Activated CD8-positive, alpha-beta T cell treated with anti-CD3 and anti-CD28 coated beads for 36 hours (primary cell): ENCODE measurements at regions of chr10 and their contacts with region 1.

Region 1: DNA sequence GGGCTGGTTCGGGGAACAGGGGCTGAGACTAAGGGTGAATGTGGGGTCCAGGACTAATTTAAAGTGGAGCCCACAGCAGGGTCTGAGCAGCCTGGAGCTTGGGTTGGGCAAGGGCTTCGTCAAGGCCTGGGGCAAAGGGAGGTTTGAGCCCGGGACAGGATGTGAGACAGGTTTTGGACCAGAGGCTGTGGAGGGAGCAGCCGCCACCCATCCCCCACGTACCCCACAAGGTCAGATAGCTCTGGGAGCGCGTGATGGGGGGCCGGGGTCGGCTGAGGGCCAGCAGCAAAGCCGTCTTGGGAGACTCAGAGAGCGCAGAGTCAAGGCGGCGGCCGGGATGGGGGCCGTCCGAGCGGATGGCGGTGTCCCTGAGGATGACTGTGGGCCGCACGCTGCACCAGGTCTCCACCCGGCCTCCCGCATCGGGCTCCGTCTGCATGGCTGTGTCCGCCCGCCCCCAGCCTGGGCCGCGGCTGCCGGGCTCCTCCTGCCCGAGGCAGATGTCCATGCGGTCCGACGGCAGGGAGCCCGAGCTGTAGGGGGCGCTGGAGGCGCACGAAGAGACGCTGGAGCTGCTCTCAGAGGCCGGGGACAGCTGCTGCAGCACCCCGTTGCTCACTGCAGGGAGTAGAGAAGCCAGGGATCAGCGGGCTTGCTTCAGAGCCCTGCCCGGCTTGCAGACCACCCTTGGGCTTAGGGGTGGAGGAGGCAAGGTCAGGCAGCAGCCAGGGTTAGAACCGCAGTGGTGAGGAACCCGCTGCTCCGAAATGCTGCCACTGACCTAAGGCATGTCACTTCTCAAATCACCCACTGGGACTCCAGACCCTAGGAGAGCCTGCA is 12.1 kb downstream of the PDZD7 start:
- DNase-seq: peak; percentile 93
- ATAC-seq: peak; percentile 87
- H3K4me3 Mint-ChIP-seq: no peak overlapping the region
- H3K27ac Mint-ChIP-seq: no peak overlapping the region
- H3K4me1 Mint-ChIP-seq: peaks cover 20% of the 10 kb centered on the region
- H3K27me3 Mint-ChIP-seq: peaks cover 42% of the 10 kb centered on the region
- CTCF ChIP-seq: peak; percentile 91

Region 2: DNA sequence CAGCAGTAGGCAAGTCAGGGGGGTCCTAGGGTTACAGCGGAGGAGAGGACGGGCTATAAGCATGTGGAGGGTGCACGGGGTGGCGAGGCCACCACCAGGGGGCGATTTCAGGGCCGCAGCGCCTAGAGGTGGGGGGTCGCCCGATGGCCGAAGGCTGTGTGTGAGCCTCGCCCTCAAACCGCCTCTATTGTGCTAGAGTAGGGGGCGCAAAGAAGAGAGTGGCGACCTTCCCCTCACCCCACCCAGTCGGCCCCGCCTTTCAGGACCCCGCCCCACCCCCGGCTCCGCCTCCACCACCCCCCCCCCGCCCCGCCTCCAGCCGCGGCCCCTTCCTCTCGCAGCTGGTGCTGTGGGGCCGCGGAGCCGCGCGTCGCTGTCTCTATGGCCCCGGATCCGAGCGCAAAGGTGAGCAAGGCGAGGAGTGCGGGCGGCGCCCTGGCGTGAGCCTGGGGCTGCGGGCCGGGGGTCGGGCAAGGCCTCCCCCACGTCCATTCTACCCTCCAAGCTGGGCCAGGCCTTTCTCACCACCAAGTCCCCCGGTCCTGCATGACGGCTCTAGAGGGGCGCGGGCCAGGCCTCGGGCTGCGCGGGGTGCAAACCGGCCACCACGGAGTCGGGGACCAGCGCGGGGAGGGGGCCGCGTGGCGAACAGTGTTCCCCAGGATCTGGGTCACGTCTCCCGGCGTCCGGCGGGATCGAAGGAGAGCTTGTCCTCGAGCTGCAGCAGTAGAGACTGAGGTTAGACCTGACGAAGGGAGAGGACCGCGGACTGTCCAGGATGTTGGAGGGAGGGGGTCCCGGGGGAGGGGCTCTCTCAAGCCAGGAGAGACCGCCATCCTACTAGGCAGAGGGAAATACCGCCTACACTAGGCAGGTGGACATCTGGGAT is 49.4 kb before region 1 on chr10 and contains the start of gene SEMA4G:
- CTCF ChIA-PET with region 1: interaction called, 58 read pairs
- POLR2A ChIA-PET with region 1: interaction called, 3 read pairs
- intact Hi-C with region 1: no loop called
- DNase-seq: peak; percentile 64
- ATAC-seq: peak; percentile 85
- H3K4me3 Mint-ChIP-seq: peak within 1 kb of the TSS; percentile 47
- H3K27ac Mint-ChIP-seq: peak within 1 kb of the TSS; percentile 12
- H3K4me1 Mint-ChIP-seq: peaks cover 20% of the 10 kb centered on the region
- H3K27me3 Mint-ChIP-seq: no peaks in the 10 kb centered on the region
- CTCF ChIP-seq: peak; percentile 78
- total RNA-seq, gene SEMA4G: 1.2 to 1.6 TPM

Region 3: DNA sequence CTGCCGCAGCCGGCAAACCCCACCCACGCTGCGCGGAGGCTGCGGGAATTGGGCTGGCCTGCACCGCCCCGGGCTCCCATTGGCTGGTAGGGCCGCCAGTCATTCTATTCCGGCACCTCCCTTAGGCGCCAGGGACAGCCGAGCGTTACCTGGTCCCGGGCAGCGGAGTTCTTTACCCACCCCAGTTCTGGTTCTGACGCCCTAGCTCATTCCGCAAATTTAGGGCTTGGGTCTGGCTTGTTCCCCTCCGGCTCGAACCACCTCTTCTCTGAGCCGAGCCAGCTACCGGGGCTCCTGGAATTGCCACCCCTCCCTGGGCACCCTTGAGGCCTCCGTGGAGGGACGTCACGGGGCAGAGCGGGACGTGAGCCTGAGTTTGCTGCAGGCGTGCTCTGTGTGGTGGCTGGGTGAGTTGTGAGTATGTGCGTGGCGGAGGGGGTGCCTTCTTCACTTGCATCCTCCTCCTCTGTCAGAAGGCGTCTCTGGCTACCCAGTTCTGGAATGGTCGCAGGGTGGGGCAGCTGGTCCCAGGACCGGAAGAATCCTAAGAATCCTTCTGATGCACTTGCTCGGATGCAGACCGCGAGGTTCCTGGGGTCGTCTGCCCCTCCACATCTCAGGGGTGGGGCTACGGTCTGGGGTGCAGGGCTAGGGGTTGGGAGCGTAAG is 12.4 kb after region 1 on chr10 and contains the starts of genes PDZD7 and SFXN3:
- CTCF ChIA-PET with region 1: interaction called, 147 read pairs
- POLR2A ChIA-PET with region 1: interaction called, 9 read pairs
- intact Hi-C with region 1: no loop called
- DNase-seq: peak; percentile 98
- ATAC-seq: peak; percentile 79
- H3K4me3 Mint-ChIP-seq: peak within 1 kb of the TSS; percentile 78
- H3K27ac Mint-ChIP-seq: peak within 1 kb of the TSS; percentile 90
- H3K4me1 Mint-ChIP-seq: peaks cover 10% of the 10 kb centered on the region
- H3K27me3 Mint-ChIP-seq: peaks cover 6% of the 10 kb centered on the region
- CTCF ChIP-seq: no peak
- total RNA-seq, gene PDZD7: 0.25 to 0.65 TPM
- total RNA-seq, gene SFXN3: 28.8 to 29.6 TPM

Region 4: DNA sequence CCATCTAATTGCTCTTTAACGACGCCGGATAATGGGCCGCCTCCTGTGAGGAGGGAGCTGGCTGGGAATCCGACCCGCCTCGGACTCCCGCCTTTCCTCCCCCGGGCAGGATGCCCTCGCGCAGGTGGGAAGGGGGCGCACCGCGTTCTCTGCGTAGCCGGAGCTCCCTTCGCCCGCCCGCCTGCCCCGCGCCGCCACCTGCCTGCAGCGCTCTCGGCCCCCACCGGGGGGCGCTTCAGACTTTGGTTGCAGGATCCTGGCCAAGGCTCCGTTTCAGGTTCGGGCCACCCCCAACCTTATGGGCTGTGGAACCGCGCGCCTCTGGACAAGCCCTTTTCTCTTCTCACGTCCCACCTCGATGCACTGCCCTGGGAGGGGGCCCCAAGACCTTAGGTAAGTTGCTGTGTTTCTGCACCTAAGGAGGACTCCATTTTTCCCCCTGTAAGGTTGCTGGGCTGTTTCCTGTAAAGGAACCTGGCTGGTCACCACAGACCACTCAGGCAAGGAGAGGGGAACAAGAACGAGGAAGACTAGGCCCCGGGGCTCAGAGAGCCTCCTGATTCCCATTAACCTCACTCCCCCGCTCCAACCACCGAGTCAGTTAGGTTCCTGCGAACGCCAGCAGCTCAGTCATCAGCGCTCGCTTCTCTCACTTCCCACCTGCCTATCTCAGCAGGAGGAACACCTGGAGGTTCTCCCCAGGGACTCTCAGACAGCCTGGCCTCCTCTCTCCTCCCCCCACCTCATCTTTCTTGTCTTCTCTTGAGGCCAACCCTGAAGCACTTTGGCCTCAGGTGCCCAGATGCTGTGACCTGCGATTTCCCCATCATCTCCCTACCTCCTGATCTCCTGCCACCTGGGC is 31.6 kb after region 1 on chr10:
- CTCF ChIA-PET with region 1: interaction called, 114 read pairs
- POLR2A ChIA-PET with region 1: no interaction called
- intact Hi-C with region 1: no loop called
- DNase-seq: peak; percentile 83
- ATAC-seq: peak; percentile 97
- H3K4me3 Mint-ChIP-seq: no peak overlapping the region
- H3K27ac Mint-ChIP-seq: no peak overlapping the region
- H3K4me1 Mint-ChIP-seq: peaks cover 9% of the 10 kb centered on the region
- H3K27me3 Mint-ChIP-seq: peaks cover 48% of the 10 kb centered on the region
- CTCF ChIP-seq: peak; percentile 88

Region 5: GRCh38 chr10:101067356-101068083 is 48.7 kb after region 1 on chr10:
- CTCF ChIA-PET with region 1: interaction called, 43 read pairs
- POLR2A ChIA-PET with region 1: no interaction called
- intact Hi-C with region 1: no loop called
- DNase-seq: peak; percentile 88
- ATAC-seq: peak; percentile 77
- H3K4me3 Mint-ChIP-seq: peak overlapping the region; percentile 74
- H3K27ac Mint-ChIP-seq: no peak overlapping the region
- H3K4me1 Mint-ChIP-seq: peaks cover 22% of the 10 kb centered on the region
- H3K27me3 Mint-ChIP-seq: peaks cover 52% of the 10 kb centered on the region
- CTCF ChIP-seq: peak; percentile 88

Region 6: DNA sequence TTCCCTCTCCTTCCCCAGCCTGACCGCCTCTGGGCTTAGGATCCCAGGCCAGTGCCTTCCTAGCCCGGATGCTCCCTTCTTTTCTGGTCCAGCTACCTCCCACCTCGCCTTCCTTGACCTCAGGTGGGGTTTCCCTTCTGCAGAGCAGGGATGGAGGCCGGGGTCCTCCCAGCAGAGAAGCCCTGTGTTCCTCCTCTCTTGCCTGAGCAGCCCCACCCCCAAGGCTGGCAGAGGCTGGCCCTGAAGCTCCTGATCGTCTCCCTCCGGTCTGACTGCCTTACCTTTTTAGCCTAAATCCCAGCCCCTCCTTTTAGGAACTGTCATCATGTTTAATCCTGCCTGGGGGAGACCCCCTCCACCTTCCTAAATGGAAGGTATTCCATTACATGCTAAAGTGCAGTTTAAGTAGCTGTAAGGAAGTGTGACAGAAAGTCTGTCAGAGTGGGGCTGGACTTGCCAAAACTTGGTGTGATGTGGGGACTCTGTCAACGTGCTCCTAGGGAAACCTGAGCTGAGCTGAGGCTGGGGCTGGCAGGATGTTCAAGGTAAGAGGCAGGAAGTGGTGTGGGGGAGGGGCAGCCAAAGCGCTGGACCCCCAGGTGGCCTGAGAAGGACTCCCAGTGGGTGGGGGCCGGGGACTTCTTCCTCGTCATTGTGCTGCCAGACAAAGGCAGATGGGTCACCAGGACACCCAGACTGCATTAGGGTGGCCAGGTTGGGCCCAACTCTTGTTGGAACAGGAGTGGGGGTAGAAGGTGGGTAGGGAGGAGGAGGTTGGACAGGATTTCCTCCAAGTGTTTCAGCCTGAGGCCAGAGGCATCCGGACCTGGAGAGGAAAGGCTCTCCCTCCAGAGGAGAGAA is 171.0 kb after region 1 on chr10:
- CTCF ChIA-PET with region 1: no interaction called
- POLR2A ChIA-PET with region 1: no interaction called
- intact Hi-C with region 1: no loop called
- DNase-seq: no peak
- ATAC-seq: no peak
- H3K4me3 Mint-ChIP-seq: no peak overlapping the region
- H3K27ac Mint-ChIP-seq: no peak overlapping the region
- H3K4me1 Mint-ChIP-seq: no peaks in the 10 kb centered on the region
- H3K27me3 Mint-ChIP-seq: peaks cover 4% of the 10 kb centered on the region
- CTCF ChIP-seq: no peak